ENCODE measurements at regions of chr4 and their contacts with region 1.

Region 1: DNA sequence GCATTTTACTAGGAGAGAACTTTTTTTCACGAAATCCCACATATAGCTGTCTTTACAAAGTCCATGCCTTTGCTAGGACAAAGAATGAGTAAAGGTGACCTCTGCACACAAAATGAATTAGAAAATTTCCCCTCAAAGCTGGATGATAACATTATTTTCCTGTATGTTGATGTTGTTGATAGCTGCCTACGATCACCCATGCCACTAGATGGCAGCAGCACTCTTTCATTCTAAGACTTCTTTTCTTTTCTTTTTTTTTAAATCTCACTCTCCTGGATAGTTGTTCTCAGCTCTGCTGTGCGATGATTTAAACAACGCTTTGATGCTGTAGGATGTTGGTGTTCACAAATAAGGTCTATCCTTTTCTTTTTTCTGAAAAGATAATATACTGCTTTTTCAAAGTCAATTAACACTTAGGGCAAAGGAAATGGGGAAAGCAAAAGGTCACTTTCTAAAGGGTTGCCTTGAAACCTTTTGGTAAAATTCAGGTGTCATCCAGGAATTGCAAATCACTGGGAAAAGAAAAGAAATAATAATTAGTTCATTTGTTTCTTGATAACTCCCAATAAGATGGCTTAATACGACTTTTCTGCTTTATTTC is 266.8 kb downstream of the C4orf33 start:
- DNase-seq: peak; percentile 31 to 63
- ATAC-seq: peak; percentile 74; a peak in 5 of 6 replicates
- H3K4me3 ChIP-seq: no peak overlapping the region
- H3K27ac ChIP-seq: no peak overlapping the region
- H3K4me1 ChIP-seq: no peaks in the 10 kb centered on the region
- CTCF ChIP-seq: peak; percentile 75
- EP300 ChIP-seq: no peak
- POLR2A ChIP-seq: no peak
- RAD21 ChIP-seq: peak; percentile 75 to 80

Region 2: DNA sequence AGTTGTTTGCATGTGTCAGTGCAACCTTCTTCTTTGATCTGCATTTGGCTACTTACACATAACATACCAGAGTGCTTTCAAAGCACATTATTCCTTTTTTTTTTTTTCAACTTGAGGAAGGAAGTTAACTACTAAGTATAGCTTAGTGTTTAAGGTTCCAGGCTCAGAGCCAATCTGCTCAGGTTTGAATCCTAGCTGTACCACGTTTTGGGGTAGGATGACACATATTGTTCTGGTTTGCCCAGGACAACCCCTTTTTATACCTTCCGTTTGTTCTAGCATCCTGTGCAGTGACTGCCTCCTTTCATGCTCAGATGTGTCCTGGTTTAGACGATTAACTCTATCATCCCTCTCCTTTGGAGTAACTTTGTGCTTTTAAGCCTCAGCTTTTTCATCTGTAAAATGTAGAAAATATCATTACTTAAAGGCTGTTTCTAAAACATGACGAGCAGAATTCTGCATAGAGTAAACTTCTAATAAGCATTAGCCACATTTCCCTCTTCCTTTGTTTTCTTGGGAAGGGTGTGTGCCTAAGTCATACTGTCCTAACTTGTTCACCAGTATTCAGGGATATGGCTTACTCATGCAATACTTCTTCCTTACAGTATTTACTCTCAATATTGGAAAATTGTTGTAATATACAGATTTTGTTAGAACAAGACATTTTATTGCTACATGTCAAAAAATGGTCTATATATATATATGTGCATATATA is 14.5 kb after region 1 on chr4:
- CTCF ChIA-PET with region 1: interaction called, 11 read pairs
- POLR2A ChIA-PET with region 1: no interaction called
- DNase-seq: no peak
- ATAC-seq: no peak
- H3K4me3 ChIP-seq: no peak overlapping the region
- H3K27ac ChIP-seq: no peak overlapping the region
- H3K4me1 ChIP-seq: no peaks in the 10 kb centered on the region
- CTCF ChIP-seq: no peak
- EP300 ChIP-seq: no peak
- POLR2A ChIP-seq: no peak
- RAD21 ChIP-seq: no peak

Region 3: DNA sequence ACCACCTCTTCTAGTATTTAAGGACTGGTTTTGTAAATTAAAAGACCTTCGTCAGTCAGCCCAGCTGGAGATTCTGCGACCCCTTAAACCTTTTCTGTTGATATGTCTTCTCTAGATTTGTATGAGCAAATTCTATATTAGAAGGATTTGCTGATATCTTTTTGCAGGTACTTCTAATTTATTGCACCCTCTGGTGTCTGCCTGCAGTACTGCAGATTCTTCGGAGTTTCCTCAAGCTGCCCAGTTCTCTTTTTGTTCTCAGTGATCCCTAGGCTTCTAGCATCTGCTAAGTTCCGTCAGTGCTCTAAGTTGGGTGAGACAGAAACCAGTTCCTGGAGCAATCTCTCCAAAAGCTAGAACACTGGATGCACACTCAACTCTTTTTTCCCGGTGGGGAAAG is 278.4 kb after region 1 on chr4:
- CTCF ChIA-PET with region 1: interaction called, 12 read pairs
- POLR2A ChIA-PET with region 1: no interaction called
- DNase-seq: peak in 1 of 2 experiments; percentile 44
- ATAC-seq: peak in 1 of 2 experiments; percentile 54; a peak in 2 of 6 replicates
- H3K4me3 ChIP-seq: no peak overlapping the region
- H3K27ac ChIP-seq: no peak overlapping the region
- H3K4me1 ChIP-seq: no peaks in the 10 kb centered on the region
- CTCF ChIP-seq: peak; percentile 47
- EP300 ChIP-seq: no peak
- POLR2A ChIP-seq: no peak
- RAD21 ChIP-seq: peak; percentile 40 to 46; a peak in 4 of 5 replicates